Right lobe of liver (tissue), 6 donors: ENCODE measurements at regions of chr12 and their contacts with region 1.

Region 1: DNA sequence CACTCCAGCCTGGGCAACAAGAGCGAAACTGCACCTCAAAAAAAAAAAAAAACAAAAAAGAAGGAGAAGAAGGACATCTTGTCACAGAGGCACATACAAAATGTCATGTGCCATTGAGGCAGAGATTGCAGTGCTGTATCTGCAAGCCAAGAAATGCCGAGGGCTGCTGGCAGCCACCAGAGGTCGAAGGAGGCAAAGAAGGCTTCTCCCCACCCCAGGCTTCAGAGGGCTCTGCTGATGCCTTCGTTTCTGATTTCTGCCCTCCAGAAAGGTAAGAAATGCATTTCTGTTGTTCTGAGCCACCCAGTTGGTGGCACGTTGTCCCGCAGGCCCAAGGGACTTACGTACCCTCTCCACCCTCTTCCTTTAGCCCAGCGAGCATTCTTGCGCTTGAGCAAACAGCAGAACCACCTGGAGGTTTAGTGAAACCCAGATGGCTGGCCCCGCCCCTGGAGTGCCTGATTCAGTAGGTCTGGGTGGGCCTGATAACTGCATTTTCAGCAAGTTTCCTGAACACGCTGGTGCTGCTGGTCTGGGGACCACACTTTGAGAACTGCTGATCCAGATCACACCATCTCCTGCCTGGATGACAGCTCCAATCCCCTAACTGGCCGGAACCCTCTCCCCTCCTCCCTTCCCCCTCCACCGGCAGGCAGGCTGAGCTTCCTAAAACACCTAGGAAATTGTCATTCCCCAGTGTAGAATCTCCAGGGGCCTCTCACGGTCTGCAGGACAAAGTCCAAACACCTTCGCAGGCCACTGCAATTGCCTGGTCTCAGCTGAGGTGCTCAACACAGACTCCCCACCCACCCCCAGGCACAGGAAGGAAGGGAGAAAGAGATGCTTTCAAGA is 21.1 kb upstream of the SCARB1 start:
- DNase-seq: peak in 1 of 3 donors; percentile 40
- ATAC-seq: peak; percentile 11 to 66 (median 54)
- H3K4me3 ChIP-seq: no peak overlapping the region
- H3K27ac ChIP-seq: no peak overlapping the region
- H3K4me1 ChIP-seq: peaks cover 0 to 24% (median 3%) of the 10 kb centered on the region in 4 donors
- H3K27me3 ChIP-seq: no peaks in the 10 kb centered on the region
- CTCF ChIP-seq: no peak
- POLR2A ChIP-seq: no peak

Region 2: DNA sequence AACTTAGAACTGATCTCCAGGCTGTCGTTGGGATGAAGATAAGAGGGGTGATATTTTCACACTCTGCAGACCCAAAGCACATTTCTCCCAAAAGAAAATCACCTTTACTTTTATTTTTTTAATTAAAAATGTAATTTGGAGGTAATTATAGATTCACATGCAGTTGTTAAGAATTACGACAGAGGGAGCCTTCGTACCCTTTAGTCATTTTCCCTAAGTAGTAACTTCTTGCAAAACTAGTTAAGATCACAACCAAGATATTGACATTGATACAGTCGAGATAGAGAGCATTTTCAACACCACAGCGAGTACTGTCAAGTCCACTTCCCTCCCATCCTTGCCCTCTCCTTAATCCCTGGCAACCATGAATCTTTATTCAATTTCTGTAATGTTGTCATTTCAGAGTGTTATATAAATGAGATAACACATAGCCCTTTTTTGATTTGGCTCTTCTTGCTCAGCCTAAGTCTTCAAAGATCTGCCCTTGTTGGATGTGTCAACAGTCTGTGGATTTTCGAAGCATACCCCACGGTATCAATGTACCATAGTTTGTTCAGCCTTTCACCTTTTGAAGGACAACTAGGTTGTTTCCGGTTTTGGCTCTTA is 1083.1 kb before region 1 on chr12:
- intact Hi-C with region 1: no loop called
- DNase-seq: no peak
- ATAC-seq: no peak
- H3K4me3 ChIP-seq: no peak overlapping the region
- H3K27ac ChIP-seq: no peak overlapping the region
- H3K4me1 ChIP-seq: no peaks in the 10 kb centered on the region
- H3K27me3 ChIP-seq: no peaks in the 10 kb centered on the region
- CTCF ChIP-seq: peak; percentile 9 to 19 (median 14)
- POLR2A ChIP-seq: no peak

Region 3: GRCh38 chr12:124804011-124804621 is 80.7 kb before region 1 on chr12:
- intact Hi-C with region 1: loop called in 1 of 2 experiments (anchors 10 kb)
- DNase-seq: peak; percentile 73 to 87 (median 85)
- ATAC-seq: peak; percentile 82 to 92 (median 88)
- H3K4me3 ChIP-seq: no peak overlapping the region
- H3K27ac ChIP-seq: peak overlapping the region; percentile 60 to 73 (median 63)
- H3K4me1 ChIP-seq: peaks cover 0 to 13% (median 5%) of the 10 kb centered on the region in 4 donors
- H3K27me3 ChIP-seq: no peaks in the 10 kb centered on the region
- CTCF ChIP-seq: peak in 1 of 4 donors; percentile 5
- POLR2A ChIP-seq: no peak